Caco-2 (cell line): ENCODE measurements at regions of chr19 and their contacts with region 1.

Region 1: GRCh38 chr19:55461259-55461973 is at the start of gene ISOC2:
- DNase-seq: peak; percentile 100
- H3K4me3 ChIP-seq: peak within 1 kb of the TSS; percentile 67
- H3K4me3 Mint-ChIP-seq: peak within 1 kb of the TSS; percentile 81
- H3K27ac Mint-ChIP-seq: peak within 1 kb of the TSS; percentile 19
- H3K4me1 ChIP-seq: peaks cover 13% of the 10 kb centered on the region
- H3K4me1 Mint-ChIP-seq: peaks cover 8% of the 10 kb centered on the region
- H3K27me3 ChIP-seq: no peaks in the 10 kb centered on the region
- H3K27me3 Mint-ChIP-seq: peaks cover 5% of the 10 kb centered on the region
- CTCF ChIP-seq: no peak
- total RNA-seq, gene ISOC2: 40.6 and 49.6 TPM in 2 replicates

Region 2: DNA sequence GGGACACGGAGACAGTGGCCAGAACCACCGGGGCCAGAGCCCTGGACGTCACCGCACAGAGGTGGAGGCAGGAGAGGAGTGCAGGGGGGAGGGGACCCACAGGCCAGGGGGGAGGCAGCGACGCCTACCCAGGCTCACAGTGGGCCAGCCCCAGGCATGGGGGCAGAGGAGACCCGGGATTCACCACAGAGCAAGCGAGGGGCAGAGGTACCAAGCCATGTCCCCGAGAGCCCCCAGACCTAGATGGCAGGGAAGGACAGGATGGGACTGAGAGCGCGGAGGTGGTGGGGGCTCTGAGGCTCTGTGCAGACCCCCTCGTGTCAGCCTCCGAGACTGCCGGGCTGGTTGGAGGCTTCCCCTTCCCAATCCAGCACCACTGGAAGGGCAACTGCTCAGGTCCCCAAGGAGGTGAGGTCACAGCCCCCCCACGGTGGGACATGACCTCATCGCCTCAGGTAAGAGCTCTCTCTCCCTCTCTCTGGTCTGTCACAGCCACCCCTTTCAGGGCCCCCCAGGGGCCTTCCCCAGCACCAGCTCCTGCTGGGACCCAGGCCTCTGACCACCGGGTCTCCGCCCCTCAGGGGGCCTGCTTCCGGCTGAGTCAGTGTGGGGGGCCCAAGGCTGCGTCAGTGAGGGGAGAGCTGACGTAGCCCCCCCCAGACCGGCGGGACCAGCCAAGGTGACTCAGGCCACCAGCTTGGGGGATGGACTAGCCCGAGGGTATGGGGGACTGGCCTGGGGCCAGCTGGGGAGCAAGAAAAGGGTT is 88.9 kb before region 1 on chr19:
- CTCF ChIA-PET with region 1: no interaction called
- POLR2A ChIA-PET with region 1: interaction called, 10 read pairs
- intact Hi-C with region 1: no loop called
- DNase-seq: peak; percentile 34 to 62
- H3K4me3 ChIP-seq: no peak overlapping the region
- H3K4me3 Mint-ChIP-seq: no peak overlapping the region
- H3K27ac Mint-ChIP-seq: peak overlapping the region; percentile 7
- H3K4me1 ChIP-seq: peaks cover 43% of the 10 kb centered on the region
- H3K4me1 Mint-ChIP-seq: peaks cover 35% of the 10 kb centered on the region
- H3K27me3 ChIP-seq: no peaks in the 10 kb centered on the region; the same call in none of the 2 replicates
- H3K27me3 Mint-ChIP-seq: peaks cover 7% of the 10 kb centered on the region
- CTCF ChIP-seq: no peak

Region 3: DNA sequence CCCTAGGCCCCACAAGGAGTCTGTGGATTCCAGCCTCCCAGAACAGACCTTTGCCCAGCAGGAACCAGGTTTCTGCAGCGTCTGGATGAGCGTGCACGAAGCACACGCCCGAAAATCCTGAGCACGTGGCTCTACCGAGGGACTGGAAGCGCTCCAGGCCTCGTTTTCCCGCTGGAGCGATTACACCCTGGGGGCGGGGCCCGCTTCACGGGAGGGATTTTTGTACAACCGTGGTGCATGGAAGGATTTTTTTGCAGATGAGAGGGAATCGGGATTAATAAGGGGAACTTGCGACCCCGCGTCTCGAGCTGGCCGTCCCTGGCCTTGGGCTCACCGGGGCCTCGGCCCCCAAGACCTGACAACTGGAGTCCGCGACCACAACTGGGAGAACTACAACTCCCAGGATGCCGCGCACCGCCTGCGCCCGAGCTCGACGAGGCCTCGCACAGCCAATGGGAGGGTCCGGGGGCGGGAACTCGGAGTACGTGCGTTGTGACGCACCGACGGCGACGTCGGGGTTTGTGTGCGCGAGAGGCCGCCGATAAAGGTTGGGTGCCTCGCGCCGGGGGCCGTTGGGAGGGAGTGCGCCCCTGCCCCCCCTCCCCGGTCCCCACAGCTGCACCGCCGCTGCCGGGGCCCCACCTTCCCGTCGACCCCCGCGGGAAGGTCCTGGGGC is 14.8 kb after region 1 on chr19 and contains the start of gene ZNF628:
- CTCF ChIA-PET with region 1: interaction called, 24 read pairs
- POLR2A ChIA-PET with region 1: interaction called, 32 read pairs
- intact Hi-C with region 1: loop called (anchors 2 kb)
- DNase-seq: peak; percentile 99
- H3K4me3 ChIP-seq: peak within 1 kb of the TSS; percentile 47
- H3K4me3 Mint-ChIP-seq: peak within 1 kb of the TSS; percentile 94
- H3K27ac Mint-ChIP-seq: peak within 1 kb of the TSS; percentile 99
- H3K4me1 ChIP-seq: peaks cover 14% of the 10 kb centered on the region
- H3K4me1 Mint-ChIP-seq: peaks cover 19% of the 10 kb centered on the region
- H3K27me3 ChIP-seq: no peaks in the 10 kb centered on the region
- H3K27me3 Mint-ChIP-seq: no peaks in the 10 kb centered on the region
- CTCF ChIP-seq: no peak
- total RNA-seq, gene ZNF628: 12.3 and 13.9 TPM in 2 replicates